Naive thymus-derived CD4-positive, alpha-beta T cell (primary cell): ENCODE measurements at regions of chr17 and their contacts with region 1.

Region 1: GRCh38 chr17:75779231-75779986 is 5.2 kb upstream of the UNK start:
- DNase-seq: peak; percentile 84 to 99 (median 96)
- ATAC-seq: peak; percentile 79
- H3K4me3 ChIP-seq: peak overlapping the region; percentile 85
- H3K4me3 Mint-ChIP-seq: peak overlapping the region; percentile 83 to 100 (median 98)
- H3K27ac ChIP-seq: peak overlapping the region; percentile 98
- H3K27ac Mint-ChIP-seq: peak overlapping the region; percentile 89 to 100 (median 99)
- H3K4me1 ChIP-seq: peaks cover 31 to 35% of the 10 kb centered on the region in 2 donors
- H3K4me1 Mint-ChIP-seq: peaks cover 19 to 68% (median 56%) of the 10 kb centered on the region in 7 donors
- H3K27me3 ChIP-seq: no peaks in the 10 kb centered on the region
- H3K27me3 Mint-ChIP-seq: peaks cover 0 to 3% (median 0%) of the 10 kb centered on the region in 5 donors

Region 2: DNA sequence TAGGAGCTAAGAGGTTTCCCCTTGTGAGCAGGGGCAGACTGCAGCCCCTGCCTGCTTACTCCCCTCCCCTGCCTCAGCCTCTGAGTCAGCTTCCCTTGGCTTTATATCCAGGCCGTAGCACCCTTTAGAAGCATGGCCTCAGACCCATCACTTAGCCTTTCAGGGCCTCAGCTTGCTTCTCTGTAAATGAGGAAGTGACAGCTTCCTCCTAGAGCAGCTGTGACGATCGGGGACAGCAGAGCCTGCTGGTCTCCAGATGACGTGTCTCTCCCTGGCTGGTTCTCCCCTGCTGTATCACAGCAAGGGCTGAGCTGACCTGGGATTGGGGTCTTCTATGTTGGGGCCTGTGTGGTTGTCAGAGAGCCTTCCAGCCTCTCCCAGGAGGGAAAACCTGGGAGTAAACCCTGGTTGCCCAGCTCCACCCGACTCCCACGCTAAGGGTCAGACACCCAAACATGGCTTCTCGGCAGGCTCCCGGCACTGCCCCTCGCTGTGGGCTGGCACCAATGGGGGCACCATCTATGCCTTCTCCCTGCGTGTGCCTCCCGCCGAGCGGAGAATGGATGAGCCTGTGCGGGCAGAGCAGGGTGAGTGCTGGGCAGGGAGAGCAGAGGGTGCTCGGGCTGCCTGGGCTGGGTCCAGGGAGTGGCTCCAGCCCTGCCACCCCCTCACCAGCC is 208.1 kb before region 1 on chr17:
- CTCF ChIA-PET with region 1: no interaction called
- POLR2A ChIA-PET with region 1: no interaction called
- intact Hi-C with region 1: no loop called
- DNase-seq: peak in 1 of 9 donors; percentile 38
- ATAC-seq: peak; percentile 92
- H3K4me3 ChIP-seq: no peak overlapping the region
- H3K4me3 Mint-ChIP-seq: peak overlapping the region in 1 of 10 donors; percentile 71
- H3K27ac ChIP-seq: no peak overlapping the region
- H3K27ac Mint-ChIP-seq: peak overlapping the region in 1 of 9 donors; percentile 92
- H3K4me1 ChIP-seq: no peaks in the 10 kb centered on the region
- H3K4me1 Mint-ChIP-seq: peaks cover 0 to 8% (median 0%) of the 10 kb centered on the region in 7 donors
- H3K27me3 ChIP-seq: no peaks in the 10 kb centered on the region
- H3K27me3 Mint-ChIP-seq: no peaks in the 10 kb centered on the region

Region 3: DNA sequence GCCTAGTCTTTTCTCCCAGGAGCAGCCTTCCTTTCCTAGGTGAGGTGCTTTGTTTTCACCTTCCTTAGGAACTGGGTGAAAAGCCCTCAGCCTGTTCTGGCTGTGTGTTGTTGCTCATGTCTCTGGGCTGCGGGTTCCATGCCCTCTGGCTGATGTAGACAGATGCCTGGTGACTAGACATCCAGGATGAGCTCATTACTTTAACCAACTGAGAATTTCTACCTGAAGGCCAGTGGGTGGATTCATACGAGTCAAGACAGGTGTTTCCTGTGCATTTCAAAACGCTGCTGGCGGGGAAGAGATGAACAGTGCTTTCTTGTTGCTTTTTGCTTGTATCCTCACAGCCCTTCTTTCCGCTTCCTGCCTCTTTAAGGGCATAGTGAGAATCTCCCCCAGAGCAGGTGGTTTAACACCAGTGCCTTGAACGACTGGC is 90.0 kb before region 1 on chr17:
- CTCF ChIA-PET with region 1: no interaction called
- POLR2A ChIA-PET with region 1: no interaction called
- intact Hi-C with region 1: no loop called
- DNase-seq: peak in 8 of 9 donors; percentile 31 to 85 (median 80)
- ATAC-seq: peak; percentile 86
- H3K4me3 ChIP-seq: no peak overlapping the region
- H3K4me3 Mint-ChIP-seq: peak overlapping the region; percentile 52 to 83 (median 68)
- H3K27ac ChIP-seq: peak overlapping the region; percentile 69
- H3K27ac Mint-ChIP-seq: peak overlapping the region; percentile 78 to 95 (median 93)
- H3K4me1 ChIP-seq: peaks cover 0 to 31% of the 10 kb centered on the region in 2 donors
- H3K4me1 Mint-ChIP-seq: peaks cover 39 to 69% (median 59%) of the 10 kb centered on the region in 7 donors
- H3K27me3 ChIP-seq: no peaks in the 10 kb centered on the region
- H3K27me3 Mint-ChIP-seq: no peaks in the 10 kb centered on the region

Region 4: DNA sequence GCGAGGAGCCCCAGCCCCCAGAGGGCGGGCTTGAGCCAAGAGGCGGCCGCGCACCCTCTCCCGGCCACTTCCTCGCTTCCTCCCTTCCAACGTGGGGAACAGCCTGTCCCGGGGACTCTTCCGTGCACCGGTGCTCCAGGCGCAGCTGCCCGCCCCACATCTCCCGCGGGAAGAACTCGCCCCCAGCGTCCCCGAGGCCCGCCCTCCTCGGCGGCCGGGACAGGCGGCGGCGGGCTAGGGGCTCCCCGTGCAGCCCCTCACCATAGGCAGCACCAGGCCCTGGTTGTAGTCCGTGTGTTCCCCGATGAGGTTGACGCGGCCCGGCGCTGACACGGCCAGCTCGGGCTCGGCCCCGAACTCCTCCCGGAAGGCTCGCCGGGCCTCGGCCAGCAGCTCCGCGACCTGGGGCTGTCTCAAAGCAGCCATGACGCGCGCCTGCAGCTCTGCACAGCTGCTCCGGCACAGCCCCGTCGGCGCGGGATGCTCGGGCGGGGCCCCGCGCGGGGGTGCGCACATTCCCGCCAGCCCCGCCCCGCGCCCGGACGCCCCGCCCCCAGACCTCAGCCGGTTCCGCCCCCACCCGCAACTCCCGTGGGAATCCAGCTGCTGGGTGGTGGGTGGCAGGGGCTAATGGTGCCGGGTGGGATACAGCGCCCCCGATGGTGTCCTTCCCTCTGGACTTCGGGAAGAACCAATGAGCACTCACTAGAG is 14.5 kb before region 1 on chr17 and contains the start of gene GALK1:
- CTCF ChIA-PET with region 1: interaction called, 14 read pairs
- POLR2A ChIA-PET with region 1: interaction called, 244 read pairs
- intact Hi-C with region 1: loop called (anchors 1 to 2 kb)
- DNase-seq: peak; percentile 56 to 78 (median 67)
- ATAC-seq: peak; percentile 97
- H3K4me3 ChIP-seq: peak within 1 kb of the TSS; percentile 71
- H3K4me3 Mint-ChIP-seq: peak within 1 kb of the TSS; percentile 62 to 84 (median 75)
- H3K27ac ChIP-seq: peak within 1 kb of the TSS; percentile 67
- H3K27ac Mint-ChIP-seq: peak within 1 kb of the TSS; percentile 32 to 87 (median 70)
- H3K4me1 ChIP-seq: peaks cover 11% of the 10 kb centered on the region in 2 donors
- H3K4me1 Mint-ChIP-seq: peaks cover 0 to 21% (median 10%) of the 10 kb centered on the region in 7 donors
- H3K27me3 ChIP-seq: no peaks in the 10 kb centered on the region
- H3K27me3 Mint-ChIP-seq: no peaks in the 10 kb centered on the region
- total RNA-seq, gene GALK1: 9.9 to 42.9 (median 22.1) TPM

Region 5: GRCh38 chr17:75791254-75791653 is 11.8 kb after region 1 on chr17:
- CTCF ChIA-PET with region 1: no interaction called
- POLR2A ChIA-PET with region 1: interaction called, 106 read pairs
- intact Hi-C with region 1: no loop called
- DNase-seq: no peak
- ATAC-seq: no peak
- H3K4me3 ChIP-seq: no peak overlapping the region
- H3K4me3 Mint-ChIP-seq: no peak overlapping the region
- H3K27ac ChIP-seq: no peak overlapping the region
- H3K27ac Mint-ChIP-seq: peak overlapping the region in 1 of 9 donors; percentile 37
- H3K4me1 ChIP-seq: peaks cover 2 to 3% of the 10 kb centered on the region in 2 donors
- H3K4me1 Mint-ChIP-seq: peaks cover 9 to 49% (median 44%) of the 10 kb centered on the region in 7 donors
- H3K27me3 ChIP-seq: no peaks in the 10 kb centered on the region
- H3K27me3 Mint-ChIP-seq: no peaks in the 10 kb centered on the region

Region 6: DNA sequence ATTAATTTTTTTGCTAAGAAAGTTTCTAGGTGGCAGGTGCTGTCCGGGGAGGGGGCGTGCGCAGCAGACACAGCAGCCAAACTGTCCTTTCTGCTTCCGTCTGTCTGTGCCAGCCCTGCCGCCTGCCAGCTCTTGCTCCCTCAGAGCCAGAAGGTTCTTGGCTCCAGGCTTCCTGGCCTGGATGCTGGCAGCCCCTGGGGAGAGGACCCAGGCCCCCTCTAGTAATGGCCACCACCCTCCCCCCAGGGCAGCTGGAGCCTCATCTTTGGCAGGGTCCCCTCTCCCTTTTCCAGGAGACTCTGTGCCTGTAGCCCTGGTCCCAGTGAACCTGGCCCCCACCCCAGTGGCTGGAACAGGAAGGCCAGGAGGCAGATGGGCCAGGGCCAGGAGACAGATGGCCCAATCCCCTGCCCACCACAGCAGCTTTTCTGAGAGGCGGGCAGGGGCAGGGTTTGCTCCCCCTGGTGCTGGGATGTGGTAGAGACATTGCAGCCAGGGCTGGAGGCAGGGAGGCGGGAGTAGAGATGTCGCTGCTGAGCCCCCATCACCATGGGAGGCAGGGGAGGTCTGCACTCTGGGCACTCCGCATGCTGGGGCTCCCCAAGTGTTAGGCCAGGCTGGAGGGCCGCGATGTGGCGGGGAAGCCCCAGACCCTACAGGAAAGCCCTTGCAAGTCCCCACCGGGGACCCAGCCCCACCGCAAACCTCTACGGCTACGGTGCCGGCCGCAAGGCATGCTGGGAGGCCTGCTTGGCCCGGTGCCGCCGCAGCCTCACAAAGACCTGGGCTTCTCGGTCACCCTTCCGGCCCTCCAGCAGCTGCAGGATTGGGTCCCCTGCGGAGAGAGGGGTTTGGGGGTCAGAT is 48.1 kb after region 1 on chr17:
- CTCF ChIA-PET with region 1: interaction called, 30 read pairs
- POLR2A ChIA-PET with region 1: interaction called, 77 read pairs
- intact Hi-C with region 1: loop called (anchors 2 to 5 kb)
- DNase-seq: peak; percentile 41 to 66 (median 61)
- ATAC-seq: peak; percentile 76
- H3K4me3 ChIP-seq: peak overlapping the region; percentile 30
- H3K4me3 Mint-ChIP-seq: peak overlapping the region; percentile 37 to 74 (median 56)
- H3K27ac ChIP-seq: peak overlapping the region; percentile 67
- H3K27ac Mint-ChIP-seq: peak overlapping the region; percentile 6 to 91 (median 76)
- H3K4me1 ChIP-seq: peaks cover 8% of the 10 kb centered on the region in 2 donors
- H3K4me1 Mint-ChIP-seq: peaks cover 5 to 16% (median 11%) of the 10 kb centered on the region in 7 donors
- H3K27me3 ChIP-seq: no peaks in the 10 kb centered on the region
- H3K27me3 Mint-ChIP-seq: no peaks in the 10 kb centered on the region